Calu3 (cell line): ENCODE measurements at regions of chr12 and their contacts with region 1.

Region 1: DNA sequence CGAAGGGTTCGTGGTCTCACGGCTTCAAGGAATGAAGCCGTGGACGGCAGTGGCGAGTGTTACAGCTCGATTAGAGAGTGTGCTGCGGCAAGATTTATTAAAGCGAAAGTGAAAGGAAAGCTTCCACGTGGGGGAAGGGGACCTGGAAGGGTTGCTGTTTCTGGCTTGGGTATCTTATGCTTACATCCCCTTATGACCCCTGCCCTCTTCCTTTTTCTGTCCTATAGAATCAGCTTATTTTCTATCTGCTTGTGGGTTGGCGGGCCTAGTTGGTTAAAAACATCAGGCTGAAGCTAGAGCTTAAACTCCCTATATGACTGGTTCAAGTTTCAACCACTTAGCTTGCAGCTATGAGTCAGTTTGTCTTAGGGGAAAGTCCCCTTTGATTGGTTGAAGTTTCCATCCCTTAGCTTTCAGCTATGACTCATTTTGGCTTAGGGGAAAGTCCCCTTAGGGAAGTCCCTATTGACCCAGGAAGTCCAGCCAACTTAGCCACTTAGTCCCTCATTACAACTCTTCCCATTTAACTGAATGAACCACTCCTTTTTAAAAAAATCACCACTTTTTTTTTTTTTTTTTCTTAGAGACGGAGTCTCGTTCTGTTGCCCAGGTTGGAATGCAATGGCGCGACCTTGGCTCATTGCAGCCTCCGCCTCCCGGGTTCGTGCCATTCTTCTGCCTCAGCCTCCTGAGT is 1494.7 kb upstream of the TMEM132C start:
- DNase-seq: peak; percentile 69
- H3K4me3 Mint-ChIP-seq: peak overlapping the region; percentile 83
- H3K27ac Mint-ChIP-seq: peak overlapping the region; percentile 98
- H3K4me1 Mint-ChIP-seq: peaks cover 36% of the 10 kb centered on the region
- H3K27me3 Mint-ChIP-seq: no peaks in the 10 kb centered on the region
- CTCF ChIP-seq: no peak

Region 2: DNA sequence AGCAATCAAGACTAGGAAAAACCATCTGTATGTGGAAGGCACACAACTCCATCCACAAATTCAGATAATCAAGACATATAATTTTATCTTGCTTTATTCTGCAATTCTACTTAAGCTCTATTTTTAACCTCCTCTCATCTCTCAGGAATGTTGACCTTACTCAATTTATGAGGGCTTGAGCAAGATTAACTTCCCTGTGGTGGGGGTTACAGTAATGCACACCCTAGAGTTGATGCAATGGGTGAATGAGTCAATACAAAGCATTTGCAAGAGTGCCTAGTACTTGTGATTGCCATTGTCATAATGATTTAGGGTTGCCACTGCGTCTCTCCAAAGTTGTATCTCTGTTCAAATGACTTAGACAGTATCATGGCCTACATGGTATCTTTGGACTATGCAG is 103.8 kb before region 1 on chr12:
- CTCF ChIA-PET with region 1: no interaction called
- intact Hi-C with region 1: loop called (anchors 5 kb)
- DNase-seq: peak; percentile 53
- H3K4me3 Mint-ChIP-seq: no peak overlapping the region
- H3K27ac Mint-ChIP-seq: peak overlapping the region; percentile 84
- H3K4me1 Mint-ChIP-seq: peaks cover 35% of the 10 kb centered on the region
- H3K27me3 Mint-ChIP-seq: no peaks in the 10 kb centered on the region
- CTCF ChIP-seq: no peak

Region 3: GRCh38 chr12:126747530-126748149 is 24.7 kb before region 1 on chr12:
- CTCF ChIA-PET with region 1: interaction called, 14 read pairs
- intact Hi-C with region 1: no loop called
- DNase-seq: peak; percentile 78
- H3K4me3 Mint-ChIP-seq: no peak overlapping the region
- H3K27ac Mint-ChIP-seq: no peak overlapping the region
- H3K4me1 Mint-ChIP-seq: no peaks in the 10 kb centered on the region
- H3K27me3 Mint-ChIP-seq: no peaks in the 10 kb centered on the region
- CTCF ChIP-seq: peak; percentile 95

Region 4: DNA sequence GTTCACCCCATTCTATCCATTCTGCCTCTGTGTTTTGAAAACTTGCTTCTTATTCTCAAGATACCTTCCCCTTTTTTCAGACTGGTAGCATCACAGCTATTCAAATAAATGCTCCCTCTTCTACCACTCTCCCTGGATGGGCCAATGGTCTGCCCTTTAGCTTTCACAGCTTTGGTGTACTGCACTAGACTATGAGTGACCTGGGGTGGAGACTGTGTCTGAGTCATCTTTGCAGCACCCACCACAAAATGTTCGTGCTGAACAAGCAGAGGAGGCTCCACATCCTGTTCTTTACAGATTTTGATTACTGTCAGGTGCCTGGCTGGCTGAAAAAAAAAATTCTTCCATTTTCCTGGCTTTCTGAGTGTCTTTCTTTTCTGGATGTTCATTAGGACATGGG is 390.6 kb after region 1 on chr12:
- CTCF ChIA-PET with region 1: interaction called, 11 read pairs
- intact Hi-C with region 1: no loop called
- DNase-seq: no peak
- H3K4me3 Mint-ChIP-seq: no peak overlapping the region
- H3K27ac Mint-ChIP-seq: no peak overlapping the region
- H3K4me1 Mint-ChIP-seq: no peaks in the 10 kb centered on the region
- H3K27me3 Mint-ChIP-seq: no peaks in the 10 kb centered on the region
- CTCF ChIP-seq: no peak